Mammary epithelial cell (primary cell): ENCODE measurements at regions of chr9 and their contacts with region 1.

Region 1: GRCh38 chr9:6907772-6908381 is 150.1 kb downstream of the KDM4C start:
- DNase-seq: no peak
- H3K4me3 ChIP-seq: no peak overlapping the region
- H3K27ac ChIP-seq: no peak overlapping the region
- H3K4me1 ChIP-seq: peaks cover 6% of the 10 kb centered on the region
- H3K27me3 ChIP-seq: no peaks in the 10 kb centered on the region
- CTCF ChIP-seq: peak; percentile 61 to 67

Region 2: GRCh38 chr9:6827439-6827838 is 80.4 kb before region 1 on chr9:
- CTCF ChIA-PET with region 1: interaction called, 13 read pairs
- dilution Hi-C with region 1: no loop called
- in situ Hi-C with region 1: no loop called
- intact Hi-C with region 1: no loop called
- DNase-seq: peak; percentile 20
- H3K4me3 ChIP-seq: no peak overlapping the region
- H3K27ac ChIP-seq: no peak overlapping the region
- H3K4me1 ChIP-seq: no peaks in the 10 kb centered on the region
- H3K27me3 ChIP-seq: no peaks in the 10 kb centered on the region
- CTCF ChIP-seq: peak; percentile 31 to 57

Region 3: DNA sequence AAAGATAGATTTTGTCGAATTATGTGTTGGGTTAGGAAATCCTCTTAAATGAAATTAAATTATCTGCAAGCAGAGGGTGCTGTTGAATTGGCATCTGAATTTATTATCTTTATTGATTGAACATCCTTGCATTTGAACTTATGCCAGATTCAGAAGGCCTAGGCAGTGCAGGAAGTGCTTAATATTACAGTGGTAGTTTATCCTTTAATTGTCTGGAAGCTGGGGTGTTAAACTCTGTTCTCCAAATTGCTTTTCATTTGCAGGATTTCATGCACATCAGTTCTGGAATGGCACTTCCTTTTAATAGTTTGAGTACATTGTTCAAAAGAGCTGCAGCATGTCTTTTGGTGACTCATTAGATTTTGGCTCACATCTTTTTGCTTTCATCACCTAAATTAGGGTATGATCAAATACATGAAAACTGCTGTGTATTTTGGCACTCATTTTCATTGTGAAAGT is 36.2 kb after region 1 on chr9:
- CTCF ChIA-PET with region 1: no interaction called
- dilution Hi-C with region 1: no loop called
- in situ Hi-C with region 1: no loop called
- intact Hi-C with region 1: no loop called
- DNase-seq: peak; percentile 50
- H3K4me3 ChIP-seq: no peak overlapping the region
- H3K27ac ChIP-seq: no peak overlapping the region
- H3K4me1 ChIP-seq: peaks cover 20% of the 10 kb centered on the region
- H3K27me3 ChIP-seq: no peaks in the 10 kb centered on the region
- CTCF ChIP-seq: peak in 1 of 2 donors; percentile 3

Region 4: DNA sequence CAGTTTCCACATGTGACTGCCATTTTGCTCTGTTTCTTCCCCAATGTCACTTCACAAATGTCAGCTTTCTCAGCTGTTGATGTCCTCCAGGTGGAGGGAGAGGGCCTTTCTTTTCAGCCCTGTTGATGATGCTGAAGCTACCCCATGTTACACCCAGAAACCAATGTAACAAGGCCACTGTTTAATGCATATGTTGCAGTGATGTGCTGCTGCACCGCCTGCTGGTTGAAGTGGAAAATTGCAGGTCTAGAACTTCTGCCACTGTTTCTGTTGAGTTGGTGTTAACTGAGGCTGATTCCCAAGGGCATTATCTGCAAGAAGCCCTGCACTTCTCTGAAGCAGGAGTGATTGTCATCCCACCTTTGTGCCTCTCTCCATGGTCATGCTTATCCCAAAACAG is 278.3 kb after region 1 on chr9:
- CTCF ChIA-PET with region 1: no interaction called
- dilution Hi-C with region 1: no loop called
- in situ Hi-C with region 1: no loop called
- intact Hi-C with region 1: loop called (anchors 2 kb)
- DNase-seq: peak; percentile 21
- H3K4me3 ChIP-seq: no peak overlapping the region
- H3K27ac ChIP-seq: no peak overlapping the region
- H3K4me1 ChIP-seq: peaks cover 13% of the 10 kb centered on the region
- H3K27me3 ChIP-seq: no peaks in the 10 kb centered on the region
- CTCF ChIP-seq: peak; percentile 59 to 70

Region 5: DNA sequence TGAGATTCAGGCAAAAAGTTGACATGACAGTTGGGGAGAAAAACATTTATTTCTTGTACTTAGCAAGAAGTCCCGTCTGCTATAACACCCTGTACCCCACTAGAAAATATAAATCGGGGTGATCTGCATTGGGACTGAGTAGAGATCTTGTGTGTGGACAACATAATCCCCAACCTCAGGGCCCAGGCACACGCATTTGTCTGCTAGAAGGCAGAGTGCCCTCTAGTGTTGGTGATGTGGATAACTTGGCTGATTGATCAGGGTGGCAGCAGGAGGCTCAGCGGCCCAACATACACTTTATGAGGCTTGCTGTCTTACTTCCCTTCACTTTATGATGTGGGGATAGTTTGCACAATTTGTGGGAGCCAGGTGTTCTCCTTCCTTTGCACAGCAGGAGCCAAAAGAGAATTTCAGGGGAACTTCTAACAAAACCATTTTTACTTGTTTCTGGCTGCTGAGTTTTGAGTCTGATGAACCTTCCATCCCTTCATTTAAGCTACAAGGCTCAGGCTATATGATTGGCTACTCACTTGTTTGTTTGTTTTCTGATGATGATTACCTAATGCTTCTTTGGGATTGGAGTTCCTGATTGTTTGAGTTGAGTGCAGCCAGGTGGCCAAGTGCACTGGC is 628.5 kb after region 1 on chr9:
- CTCF ChIA-PET with region 1: no interaction called
- dilution Hi-C with region 1: no loop called
- in situ Hi-C with region 1: no loop called
- intact Hi-C with region 1: loop called (anchors 10 kb)
- DNase-seq: peak; percentile 27
- H3K4me3 ChIP-seq: no peak overlapping the region
- H3K27ac ChIP-seq: no peak overlapping the region
- H3K4me1 ChIP-seq: no peaks in the 10 kb centered on the region
- H3K27me3 ChIP-seq: peaks cover 3% of the 10 kb centered on the region
- CTCF ChIP-seq: peak; percentile 86 to 88